ENCODE measurements at regions of chr21 and their contacts with region 1.

Region 1: GRCh38 chr21:43312751-43313169 is 114.2 kb downstream of the SIK1 start:
- DNase-seq: peak; percentile 57
- ATAC-seq: no peak

Region 2: DNA sequence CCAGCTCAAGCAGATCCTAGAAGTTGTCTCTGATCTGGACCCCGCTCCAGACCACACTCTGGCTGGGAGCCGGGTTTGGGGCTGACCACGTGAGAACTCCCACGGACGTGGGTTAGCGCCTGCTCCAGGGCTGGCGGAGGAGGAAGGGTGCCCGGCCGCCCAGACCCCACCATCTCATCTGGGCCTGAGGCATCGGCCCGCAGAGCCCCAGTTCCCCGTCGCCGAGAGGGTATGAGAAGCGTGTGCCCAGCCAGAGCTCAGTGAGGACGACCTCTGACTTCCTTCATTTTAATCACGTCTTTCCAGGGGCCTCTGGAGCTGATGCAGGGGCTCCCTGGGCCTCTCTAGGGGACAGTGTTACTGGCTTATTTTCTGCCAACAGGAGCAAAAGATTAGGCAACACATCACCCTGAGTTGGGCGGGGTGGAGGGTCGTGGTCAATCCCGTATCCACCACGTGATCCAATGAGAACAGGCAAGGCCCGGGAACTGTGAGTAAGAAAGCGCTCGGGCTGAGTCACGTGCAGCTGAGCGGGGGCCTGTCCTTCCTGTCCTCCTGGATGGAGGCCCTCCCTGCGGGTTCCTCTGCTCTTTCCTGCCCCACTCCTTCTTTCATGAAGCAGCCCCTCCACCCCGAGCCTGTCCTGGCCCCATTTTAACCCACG is 33.1 kb after region 1 on chr21:
- intact Hi-C with region 1: loop called (anchors 5 kb)
- DNase-seq: no peak
- ATAC-seq: no peak

Measured in Right ventricle myocardium inferior (tissue), 1 donor.